ENCODE measurements at regions of chr3 and their contacts with region 1.

Region 1: DNA sequence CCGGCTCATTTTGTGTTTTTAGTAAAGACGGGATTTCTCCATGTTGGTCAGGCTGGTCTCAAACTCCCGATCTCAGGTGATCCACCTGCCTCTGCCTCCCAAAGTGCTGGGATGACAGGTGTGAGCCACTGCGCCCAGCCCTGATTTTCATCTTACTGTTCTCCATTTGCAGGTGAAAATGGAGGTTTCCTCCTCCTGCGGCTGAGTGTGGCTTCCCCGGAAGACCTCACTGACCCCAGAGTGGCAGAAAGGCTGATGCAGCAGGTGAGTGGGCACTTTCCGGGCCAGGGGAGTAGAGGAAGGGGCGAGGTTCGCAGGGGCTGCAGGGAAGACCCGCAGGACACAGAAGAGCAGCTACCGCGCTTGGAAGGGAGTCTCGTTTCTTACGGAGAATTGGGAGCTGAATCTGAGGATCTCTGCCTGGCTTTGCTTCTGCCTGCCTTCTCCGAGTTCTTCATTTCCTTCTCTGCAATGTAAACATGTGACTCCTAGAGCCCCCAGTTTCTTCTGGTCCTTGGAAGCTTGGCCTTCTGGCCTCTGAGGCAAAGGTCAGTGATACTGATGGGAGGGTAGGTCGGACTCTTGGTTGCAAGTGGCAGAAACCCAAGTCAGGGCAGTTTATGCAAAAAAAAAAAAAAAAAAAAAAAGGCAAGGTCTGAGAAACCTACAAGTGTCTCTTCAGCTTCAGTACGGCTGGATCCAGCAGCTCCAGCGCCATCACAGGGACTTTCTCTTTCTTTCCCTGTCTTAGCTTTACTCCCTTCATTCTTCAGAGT is 8.9 kb downstream of the MUC20 start:
- DNase-seq: no peak
- H3K4me3 ChIP-seq: no peak overlapping the region
- H3K27me3 ChIP-seq: peaks cover 9% of the 10 kb centered on the region
- CTCF ChIP-seq: no peak

Region 2: GRCh38 chr3:196920733-196921132 is 1191.1 kb after region 1 on chr3:
- CTCF ChIA-PET with region 1: no interaction called
- POLR2A ChIA-PET with region 1: interaction called, 10 read pairs
- DNase-seq: no peak
- H3K4me3 ChIP-seq: no peak overlapping the region
- H3K27me3 ChIP-seq: no peaks in the 10 kb centered on the region
- CTCF ChIP-seq: no peak